ENCODE measurements at regions of chr5 and their contacts with region 1.

Region 1: GRCh38 chr5:62403434-62404250 is at the start of gene DIMT1:
- DNase-seq: peak; percentile 92

Region 2: GRCh38 chr5:62322484-62322883 is 81.2 kb before region 1 on chr5:
- CTCF ChIA-PET with region 1: no interaction called
- POLR2A ChIA-PET with region 1: no interaction called
- DNase-seq: no peak

Region 3: GRCh38 chr5:62347928-62348327 is 55.7 kb before region 1 on chr5:
- CTCF ChIA-PET with region 1: no interaction called
- POLR2A ChIA-PET with region 1: no interaction called
- DNase-seq: no peak

Region 4: DNA sequence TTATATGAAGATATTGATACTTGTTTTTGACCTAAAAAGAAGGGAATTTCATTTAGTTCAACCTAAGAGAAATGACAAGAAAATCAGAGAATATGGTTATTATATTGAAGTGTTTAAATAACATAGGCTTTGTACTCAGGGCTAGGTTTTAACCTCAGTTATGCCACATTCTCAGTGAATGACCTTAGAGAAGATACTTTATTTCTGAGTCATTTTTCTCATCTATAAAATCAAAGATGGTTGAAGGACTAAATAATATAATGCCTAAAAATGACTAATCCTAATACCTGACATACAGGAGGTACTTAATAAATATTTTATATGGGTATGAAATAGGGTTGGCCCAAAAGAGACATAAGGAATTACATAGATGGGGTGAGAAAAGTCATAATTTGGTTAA is 32.2 kb before region 1 on chr5:
- CTCF ChIA-PET with region 1: no interaction called
- POLR2A ChIA-PET with region 1: no interaction called
- DNase-seq: no peak

Region 5: GRCh38 chr5:62386824-62387223 is 16.8 kb before region 1 on chr5:
- CTCF ChIA-PET with region 1: interaction called, 4 read pairs
- POLR2A ChIA-PET with region 1: interaction called, 11 read pairs
- DNase-seq: no peak

Measured in HEK293T (cell line).